ENCODE measurements at regions of chrX and their contacts with region 1.

Region 1: GRCh38 chrX:83469551-83469950 is 38.5 kb upstream of the POU3F4 start:
- DNase-seq: peak; percentile 36 to 70 (median 62)
- H3K4me3 ChIP-seq: no peak overlapping the region
- H3K27ac ChIP-seq: no peak overlapping the region
- H3K4me1 ChIP-seq: no peaks in the 10 kb centered on the region
- H3K27me3 ChIP-seq: no peaks in the 10 kb centered on the region

Region 2: GRCh38 chrX:83630662-83631061 is 161.1 kb after region 1 on chrX:
- CTCF ChIA-PET with region 1: interaction called, 10 read pairs
- POLR2A ChIA-PET with region 1: no interaction called
- DNase-seq: no peak
- H3K4me3 ChIP-seq: no peak overlapping the region
- H3K27ac ChIP-seq: no peak overlapping the region
- H3K4me1 ChIP-seq: peaks cover 0 to 2% (median 0%) of the 10 kb centered on the region in 4 experiments
- H3K27me3 ChIP-seq: no peaks in the 10 kb centered on the region